ENCODE measurements at regions of chr1 and their contacts with region 1.

Region 1: DNA sequence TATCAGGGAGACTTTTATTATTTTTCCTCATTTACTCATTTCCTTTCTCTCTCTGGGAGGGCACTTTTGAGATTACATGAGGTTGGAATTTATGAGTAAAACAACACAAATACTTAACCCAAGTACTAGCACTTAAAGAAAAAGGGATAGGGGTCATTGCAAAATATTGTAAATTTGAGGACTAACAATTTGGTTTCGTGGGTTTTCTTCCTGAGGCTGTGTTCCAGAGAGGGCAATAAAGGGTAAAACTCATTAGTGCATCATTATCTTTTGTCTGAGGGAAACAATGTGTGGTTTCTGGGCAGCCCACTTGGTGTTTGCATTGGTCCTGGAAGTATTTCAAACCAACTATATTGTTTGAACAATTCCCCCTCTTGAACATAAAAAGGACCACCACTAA is 96.5 kb downstream of the GREM2 start:
- DNase-seq: no peak
- H3K4me3 ChIP-seq: no peak overlapping the region
- H3K27ac ChIP-seq: no peak overlapping the region
- H3K4me1 ChIP-seq: no peaks in the 10 kb centered on the region
- H3K27me3 ChIP-seq: no peaks in the 10 kb centered on the region
- CTCF ChIP-seq: no peak

Region 2: GRCh38 chr1:239778221-239778813 is 737.2 kb before region 1 on chr1:
- intact Hi-C with region 1: loop called (anchors 10 kb)
- DNase-seq: no peak
- H3K4me3 ChIP-seq: no peak overlapping the region
- H3K27ac ChIP-seq: no peak overlapping the region
- H3K4me1 ChIP-seq: peaks cover 0 to 33% (median 0%) of the 10 kb centered on the region in 4 donors
- H3K27me3 ChIP-seq: no peaks in the 10 kb centered on the region
- CTCF ChIP-seq: no peak

Region 3: DNA sequence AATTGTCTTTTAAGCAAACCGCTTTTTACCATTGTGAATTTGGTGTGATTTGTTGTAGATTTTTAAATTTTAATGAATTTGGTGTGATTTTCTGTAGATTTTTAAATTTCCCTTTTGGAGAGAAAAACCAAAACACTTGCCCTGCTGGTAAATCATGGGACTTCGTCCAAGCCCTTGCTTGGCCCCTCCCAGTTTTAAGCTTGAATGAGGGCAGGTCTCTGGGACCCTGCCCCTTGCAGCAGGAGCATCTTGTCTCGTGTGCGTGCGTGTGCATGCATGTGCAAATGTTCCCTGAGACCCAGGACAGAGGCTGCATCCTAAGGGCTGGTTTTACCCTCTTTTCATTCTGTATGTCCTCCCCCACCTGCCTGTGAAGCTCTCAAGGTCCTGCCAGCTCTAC is 152.2 kb before region 1 on chr1:
- intact Hi-C with region 1: no loop called
- DNase-seq: no peak
- H3K4me3 ChIP-seq: no peak overlapping the region
- H3K27ac ChIP-seq: no peak overlapping the region
- H3K4me1 ChIP-seq: no peaks in the 10 kb centered on the region
- H3K27me3 ChIP-seq: no peaks in the 10 kb centered on the region
- CTCF ChIP-seq: no peak

Region 4: GRCh38 chr1:240646571-240647240 is 131.2 kb after region 1 on chr1:
- intact Hi-C with region 1: no loop called
- DNase-seq: no peak
- H3K4me3 ChIP-seq: no peak overlapping the region
- H3K27ac ChIP-seq: no peak overlapping the region
- H3K4me1 ChIP-seq: no peaks in the 10 kb centered on the region
- H3K27me3 ChIP-seq: no peaks in the 10 kb centered on the region
- CTCF ChIP-seq: no peak